PC-9 (cell line): ENCODE measurements at regions of chr2 and their contacts with region 1.

Region 1: GRCh38 chr2:234981197-234982117 is 29.6 kb downstream of the SH3BP4 start:
- DNase-seq: peak; percentile 98 to 100
- H3K4me3 ChIP-seq: peak overlapping the region; percentile 52
- H3K27ac ChIP-seq: peak overlapping the region; percentile 96
- H3K4me1 ChIP-seq: peaks cover 78% of the 10 kb centered on the region
- H3K27me3 ChIP-seq: no peaks in the 10 kb centered on the region
- CTCF ChIP-seq: no peak

Region 2: GRCh38 chr2:233976690-233977294 is 1004.7 kb before region 1 on chr2:
- CTCF ChIA-PET with region 1: no interaction called
- POLR2A ChIA-PET with region 1: no interaction called
- intact Hi-C with region 1: loop called (anchors 10 kb)
- DNase-seq: peak; percentile 56 to 94
- H3K4me3 ChIP-seq: no peak overlapping the region
- H3K27ac ChIP-seq: peak overlapping the region; percentile 55
- H3K4me1 ChIP-seq: peaks cover 69% of the 10 kb centered on the region
- H3K27me3 ChIP-seq: no peaks in the 10 kb centered on the region
- CTCF ChIP-seq: peak; percentile 88

Region 3: GRCh38 chr2:234550511-234551107 is 430.8 kb before region 1 on chr2:
- CTCF ChIA-PET with region 1: no interaction called
- POLR2A ChIA-PET with region 1: no interaction called
- intact Hi-C with region 1: loop called (anchors 1 kb)
- DNase-seq: peak; percentile 74 to 85
- H3K4me3 ChIP-seq: no peak overlapping the region
- H3K27ac ChIP-seq: no peak overlapping the region
- H3K4me1 ChIP-seq: peaks cover 11% of the 10 kb centered on the region
- H3K27me3 ChIP-seq: no peaks in the 10 kb centered on the region
- CTCF ChIP-seq: peak; percentile 99

Region 4: DNA sequence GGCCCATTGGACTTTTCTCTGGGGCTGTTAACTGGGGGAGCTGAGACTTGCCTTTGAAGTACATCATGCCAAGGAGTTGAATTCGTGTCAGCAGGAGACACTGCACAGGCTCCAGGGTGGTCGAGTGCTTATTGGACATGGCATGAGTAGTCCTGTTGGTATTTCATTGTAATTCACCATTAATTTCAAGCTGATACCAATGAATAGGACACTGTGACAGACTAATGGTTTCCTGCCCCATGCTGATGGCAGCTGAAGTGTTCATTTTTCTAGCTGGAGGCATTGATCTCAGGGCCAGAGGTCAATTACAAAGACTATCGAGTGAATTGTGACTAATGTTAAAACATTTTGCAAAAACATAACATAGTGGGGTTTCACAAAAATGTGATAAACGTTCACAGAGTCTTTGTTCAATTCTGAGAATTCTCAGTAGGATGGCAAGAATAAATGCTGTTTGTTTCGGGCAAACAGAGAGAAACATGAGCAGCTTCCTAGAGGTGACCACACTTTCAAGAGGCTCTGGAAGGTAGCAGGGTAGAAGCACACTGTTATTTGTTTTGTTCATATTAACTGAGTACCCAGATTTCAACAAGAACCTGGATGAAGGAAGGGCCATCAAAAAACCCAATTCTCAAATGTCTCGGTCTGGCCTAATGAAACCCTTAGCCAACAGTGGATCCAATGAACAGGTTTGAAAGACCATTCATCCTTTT is 394.0 kb before region 1 on chr2:
- CTCF ChIA-PET with region 1: no interaction called
- POLR2A ChIA-PET with region 1: no interaction called
- intact Hi-C with region 1: no loop called
- DNase-seq: no peak
- H3K4me3 ChIP-seq: no peak overlapping the region
- H3K27ac ChIP-seq: no peak overlapping the region
- H3K4me1 ChIP-seq: no peaks in the 10 kb centered on the region
- H3K27me3 ChIP-seq: no peaks in the 10 kb centered on the region
- CTCF ChIP-seq: no peak

Region 5: DNA sequence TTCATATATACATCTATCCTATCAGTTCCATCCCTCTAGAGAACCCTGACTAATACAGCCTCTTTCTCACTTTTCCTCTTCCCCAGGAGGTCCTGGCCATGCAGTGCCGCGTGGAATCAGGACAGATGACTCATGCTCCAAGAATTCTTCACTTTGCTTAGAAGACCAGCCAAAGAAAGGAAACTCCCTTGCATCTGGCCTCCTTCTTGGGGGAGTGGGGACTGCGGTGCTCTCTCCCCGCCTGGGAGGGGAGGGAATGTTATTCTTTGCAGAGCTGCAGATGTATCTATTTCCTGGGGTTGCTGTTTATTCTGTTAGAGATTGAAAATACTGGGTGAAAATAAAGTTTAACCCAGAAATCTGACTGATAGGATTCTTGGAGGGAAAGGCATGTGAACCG is 141.1 kb before region 1 on chr2:
- CTCF ChIA-PET with region 1: interaction called, 3 read pairs
- POLR2A ChIA-PET with region 1: no interaction called
- intact Hi-C with region 1: loop called (anchors 1 kb)
- DNase-seq: peak; percentile 86 to 92
- H3K4me3 ChIP-seq: no peak overlapping the region
- H3K27ac ChIP-seq: peak overlapping the region; percentile 63
- H3K4me1 ChIP-seq: peaks cover 38% of the 10 kb centered on the region
- H3K27me3 ChIP-seq: no peaks in the 10 kb centered on the region
- CTCF ChIP-seq: no peak

Region 6: GRCh38 chr2:234996069-234996940 is 14.8 kb after region 1 on chr2:
- CTCF ChIA-PET with region 1: no interaction called
- POLR2A ChIA-PET with region 1: interaction called, 6 read pairs
- intact Hi-C with region 1: loop called (anchors 1 kb)
- DNase-seq: peak in 1 of 2 experiments; percentile 89
- H3K4me3 ChIP-seq: no peak overlapping the region
- H3K27ac ChIP-seq: 0 out of 2 replicates have a peak overlapping the region, but pooled peaks have one; percentile 6
- H3K4me1 ChIP-seq: peaks cover 41% of the 10 kb centered on the region
- H3K27me3 ChIP-seq: no peaks in the 10 kb centered on the region
- CTCF ChIP-seq: no peak

Region 7: DNA sequence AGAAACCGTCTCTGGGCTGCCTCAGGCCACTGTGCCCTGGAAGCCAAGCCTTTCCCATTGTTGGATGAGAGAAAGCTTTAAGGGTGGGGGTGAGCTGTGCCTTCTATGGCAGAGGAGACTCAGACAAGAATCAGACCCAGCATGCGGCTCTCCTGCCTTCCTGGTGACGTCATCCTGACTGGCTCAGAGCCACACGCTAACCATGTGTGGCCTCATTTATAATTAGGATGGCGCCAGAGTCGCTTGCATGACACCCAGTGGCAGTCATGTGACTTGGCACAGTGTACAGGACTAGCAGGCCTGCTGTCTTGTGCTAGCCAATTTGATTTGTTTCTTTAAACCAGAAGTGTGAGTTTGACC is 69.5 kb after region 1 on chr2:
- CTCF ChIA-PET with region 1: no interaction called
- POLR2A ChIA-PET with region 1: no interaction called
- intact Hi-C with region 1: loop called (anchors 1 kb)
- DNase-seq: peak; percentile 89 to 97
- H3K4me3 ChIP-seq: no peak overlapping the region
- H3K27ac ChIP-seq: peak overlapping the region; percentile 74
- H3K4me1 ChIP-seq: peaks cover 57% of the 10 kb centered on the region
- H3K27me3 ChIP-seq: no peaks in the 10 kb centered on the region
- CTCF ChIP-seq: no peak; the same call in 1 of the 2 replicates

Region 8: GRCh38 chr2:235129850-235130249 is 148.4 kb after region 1 on chr2:
- CTCF ChIA-PET with region 1: no interaction called
- POLR2A ChIA-PET with region 1: no interaction called
- intact Hi-C with region 1: no loop called
- DNase-seq: no peak
- H3K4me3 ChIP-seq: no peak overlapping the region
- H3K27ac ChIP-seq: no peak overlapping the region
- H3K4me1 ChIP-seq: no peaks in the 10 kb centered on the region
- H3K27me3 ChIP-seq: no peaks in the 10 kb centered on the region
- CTCF ChIP-seq: no peak